Endothelial cell of umbilical vein (primary cell): ENCODE measurements at regions of chr14 and their contacts with region 1.

Region 1: GRCh38 chr14:106163306-106163705 is 636.9 kb downstream of the TMEM121 start:
- DNase-seq: no peak
- H3K4me3 ChIP-seq: no peak overlapping the region
- H3K27ac ChIP-seq: no peak overlapping the region
- H3K4me1 ChIP-seq: no peaks in the 10 kb centered on the region
- H3K27me3 ChIP-seq: no peaks in the 10 kb centered on the region
- CTCF ChIP-seq: no peak
- POLR2A ChIP-seq: no peak

Region 2: GRCh38 chr14:105554022-105554421 is 609.3 kb before region 1 on chr14:
- CTCF ChIA-PET with region 1: no interaction called
- POLR2A ChIA-PET with region 1: no interaction called
- dilution Hi-C with region 1: no loop called
- intact Hi-C with region 1: loop called (anchors 10 kb)
- DNase-seq: no peak
- H3K4me3 ChIP-seq: no peak overlapping the region
- H3K27ac ChIP-seq: no peak overlapping the region
- H3K4me1 ChIP-seq: no peaks in the 10 kb centered on the region
- H3K27me3 ChIP-seq: no peaks in the 10 kb centered on the region
- CTCF ChIP-seq: no peak
- POLR2A ChIP-seq: no peak